ENCODE measurements at regions of chr6 and their contacts with region 1.

Region 1: GRCh38 chr6:32971581-32972352 is 3.4 kb downstream of the BRD2 start:
- DNase-seq: peak; percentile 99
- H3K4me3 Mint-ChIP-seq: peak overlapping the region; percentile 96
- H3K27ac Mint-ChIP-seq: peak overlapping the region; percentile 98
- H3K4me1 Mint-ChIP-seq: peaks cover 32% of the 10 kb centered on the region
- H3K27me3 Mint-ChIP-seq: peaks cover 4% of the 10 kb centered on the region

Region 2: GRCh38 chr6:32127717-32128592 is 843.8 kb before region 1 on chr6 and contains the start of gene ATF6B:
- intact Hi-C with region 1: loop called (anchors 1 kb)
- DNase-seq: peak; percentile 95
- H3K4me3 Mint-ChIP-seq: peak within 1 kb of the TSS; percentile 99
- H3K27ac Mint-ChIP-seq: peak within 1 kb of the TSS; percentile 94
- H3K4me1 Mint-ChIP-seq: peaks cover 45% of the 10 kb centered on the region
- H3K27me3 Mint-ChIP-seq: peaks cover 2% of the 10 kb centered on the region
- total RNA-seq, gene ATF6B: 80.1 and 97.6 TPM in 2 replicates

Region 3: DNA sequence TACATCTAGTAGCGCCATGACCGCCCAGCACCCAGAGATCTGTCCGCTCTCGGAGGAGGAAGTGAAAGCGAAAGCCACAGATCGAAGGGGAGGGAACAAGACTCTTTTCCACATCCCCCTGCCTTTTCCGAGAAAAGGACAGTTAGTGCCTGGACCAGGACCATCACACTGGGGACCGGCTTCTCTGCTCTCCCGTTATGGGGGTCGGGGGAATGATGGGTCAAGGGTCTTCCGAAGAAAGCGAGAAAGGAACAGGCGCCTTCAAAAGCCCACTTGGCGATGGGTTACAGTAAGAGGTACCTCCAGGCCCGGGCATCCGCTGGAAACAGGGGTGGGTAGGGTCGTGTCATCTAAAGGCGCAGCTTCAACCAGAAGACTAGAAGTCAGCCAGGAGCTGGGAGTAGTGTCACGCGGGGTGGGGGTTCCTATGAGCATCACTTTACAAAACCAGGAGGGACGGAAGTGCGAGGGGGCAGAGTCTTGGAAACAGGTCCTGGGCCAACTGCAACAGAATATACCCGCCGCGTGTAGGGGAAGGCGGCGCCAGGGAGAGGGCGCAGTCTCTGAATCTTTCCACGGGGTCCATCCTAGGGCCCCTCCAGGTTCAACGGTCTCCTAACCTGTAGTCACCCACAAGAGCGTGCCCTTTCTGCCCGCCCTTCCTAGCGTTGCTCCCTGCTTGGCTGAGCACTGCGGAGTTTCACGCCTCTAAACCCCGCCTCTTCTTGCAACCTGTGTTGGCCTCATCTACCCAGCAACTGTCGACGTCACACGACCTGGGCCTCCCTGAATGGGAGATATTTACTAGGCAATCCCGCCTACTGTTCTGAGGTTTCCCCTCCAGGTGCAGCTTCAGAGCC is 127.6 kb before region 1 on chr6 and contains the start of gene PSMB8:
- intact Hi-C with region 1: loop called (anchors 1 kb)
- DNase-seq: peak; percentile 96
- H3K4me3 Mint-ChIP-seq: peak within 1 kb of the TSS; percentile 93
- H3K27ac Mint-ChIP-seq: peak within 1 kb of the TSS; percentile 98
- H3K4me1 Mint-ChIP-seq: peaks cover 82% of the 10 kb centered on the region
- H3K27me3 Mint-ChIP-seq: no peaks in the 10 kb centered on the region
- total RNA-seq, gene PSMB8: 353 and 358 TPM in 2 replicates

Region 4: DNA sequence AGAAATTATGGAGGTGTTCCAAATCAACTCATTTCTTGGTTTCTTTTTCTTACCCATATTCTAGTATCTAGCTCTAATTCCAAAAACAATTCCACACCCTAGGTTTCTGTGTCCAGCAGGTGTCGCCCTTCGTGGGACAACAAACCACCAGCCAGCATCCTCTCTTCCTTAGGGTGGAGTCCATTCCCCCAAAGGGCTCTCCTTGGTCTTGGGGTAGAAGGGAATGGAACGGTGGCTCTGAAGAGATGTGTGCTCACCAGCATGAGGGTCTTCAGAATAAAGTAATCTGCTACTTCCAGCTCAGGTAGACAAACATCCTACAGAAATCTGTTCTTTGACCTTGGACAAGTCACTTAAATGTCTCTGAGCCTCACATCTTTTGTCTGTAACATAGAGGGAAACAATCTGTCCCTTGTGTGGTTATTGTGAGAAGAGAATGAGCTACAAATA is 38.1 kb before region 1 on chr6:
- intact Hi-C with region 1: loop called (anchors 1 kb)
- DNase-seq: peak; percentile 60
- H3K4me3 Mint-ChIP-seq: no peak overlapping the region
- H3K27ac Mint-ChIP-seq: no peak overlapping the region
- H3K4me1 Mint-ChIP-seq: peaks cover 11% of the 10 kb centered on the region
- H3K27me3 Mint-ChIP-seq: peaks cover 17% of the 10 kb centered on the region

Region 5: DNA sequence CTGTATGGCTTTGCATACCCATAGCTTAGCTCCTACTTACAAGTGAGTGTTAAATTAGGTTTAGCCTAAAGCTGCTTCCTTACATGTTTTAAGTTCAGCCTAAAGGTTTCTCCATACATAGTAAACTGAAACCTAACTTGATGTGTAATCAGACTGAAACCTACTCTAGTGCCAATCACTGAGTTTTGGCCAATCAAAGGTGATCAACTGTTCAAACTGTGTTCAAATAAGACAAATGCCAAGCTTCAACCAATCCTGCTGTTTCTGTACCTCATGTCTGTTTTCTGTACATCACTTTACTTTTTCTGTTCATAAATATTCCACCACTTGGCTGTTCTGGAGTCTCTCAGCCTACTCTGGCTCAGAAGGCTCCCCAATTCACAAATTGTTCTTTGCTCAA is 17.6 kb after region 1 on chr6:
- intact Hi-C with region 1: no loop called
- DNase-seq: no peak
- H3K4me3 Mint-ChIP-seq: no peak overlapping the region
- H3K27ac Mint-ChIP-seq: no peak overlapping the region
- H3K4me1 Mint-ChIP-seq: peaks cover 10% of the 10 kb centered on the region
- H3K27me3 Mint-ChIP-seq: peaks cover 18% of the 10 kb centered on the region

Region 6: GRCh38 chr6:33200219-33201146 is 228.7 kb after region 1 on chr6 and contains the starts of genes RXRB and SLC39A7:
- intact Hi-C with region 1: loop called (anchors 1 kb)
- DNase-seq: peak; percentile 97
- H3K4me3 Mint-ChIP-seq: peak within 1 kb of the TSS; percentile 100
- H3K27ac Mint-ChIP-seq: peak within 1 kb of the TSS; percentile 97
- H3K4me1 Mint-ChIP-seq: peaks cover 75% of the 10 kb centered on the region
- H3K27me3 Mint-ChIP-seq: no peaks in the 10 kb centered on the region
- total RNA-seq, gene RXRB: 46.6 and 47.4 TPM in 2 replicates
- total RNA-seq, gene SLC39A7: 67.1 and 68.8 TPM in 2 replicates

Region 7: GRCh38 chr6:33391278-33391921 is 419.6 kb after region 1 on chr6 and contains the start of gene KIFC1:
- intact Hi-C with region 1: loop called (anchors 1 kb)
- DNase-seq: peak; percentile 99
- H3K4me3 Mint-ChIP-seq: peak within 1 kb of the TSS; percentile 84
- H3K27ac Mint-ChIP-seq: peak within 1 kb of the TSS; percentile 94
- H3K4me1 Mint-ChIP-seq: peaks cover 47% of the 10 kb centered on the region
- H3K27me3 Mint-ChIP-seq: peaks cover 2% of the 10 kb centered on the region
- total RNA-seq, gene KIFC1: 54.7 and 59.6 TPM in 2 replicates